Pancreas (tissue), 10 donors: ENCODE measurements at regions of chr6 and their contacts with region 1.

Region 1: DNA sequence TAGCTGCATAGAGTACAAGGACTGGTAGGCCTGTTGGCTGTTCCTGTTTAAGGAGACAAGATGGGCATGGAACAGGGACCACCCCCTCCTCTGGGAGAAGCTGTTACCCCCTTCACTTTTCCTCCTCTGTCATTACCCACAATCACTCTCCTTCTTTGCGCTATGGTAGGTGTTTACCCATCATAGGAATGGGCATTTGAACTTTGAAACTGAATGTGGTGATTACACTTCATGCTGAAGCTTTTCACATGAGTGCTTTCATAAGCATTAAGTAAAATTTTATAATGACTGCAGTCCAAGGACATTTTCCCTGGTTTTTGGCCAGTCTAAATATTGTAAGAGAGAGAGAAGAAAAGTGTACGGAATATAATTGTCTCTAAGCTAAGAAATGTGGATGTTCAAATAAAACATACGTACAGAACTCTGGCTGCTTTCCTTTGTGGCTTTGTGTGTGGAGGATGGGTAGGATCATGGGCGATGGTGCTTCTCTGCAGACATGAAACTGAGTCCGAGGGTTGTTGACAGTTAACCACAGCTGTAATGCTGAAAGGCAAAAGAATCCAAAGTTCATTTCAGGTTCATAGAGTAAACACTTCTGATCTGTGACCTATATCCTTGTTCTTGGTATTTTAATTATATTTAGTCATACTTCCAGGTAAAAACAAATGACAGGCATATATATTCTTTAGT is 56.3 kb downstream of the CCN2 start:
- DNase-seq: no peak
- ATAC-seq: peak; percentile 69 to 86 (median 80)
- H3K4me3 ChIP-seq: no peak overlapping the region
- H3K27ac ChIP-seq: peak overlapping the region; percentile 34 to 74 (median 58)
- H3K4me1 ChIP-seq: peaks cover 9 to 18% (median 15%) of the 10 kb centered on the region in 3 donors
- H3K27me3 ChIP-seq: no peaks in the 10 kb centered on the region
- CTCF ChIP-seq: no peak

Region 2: DNA sequence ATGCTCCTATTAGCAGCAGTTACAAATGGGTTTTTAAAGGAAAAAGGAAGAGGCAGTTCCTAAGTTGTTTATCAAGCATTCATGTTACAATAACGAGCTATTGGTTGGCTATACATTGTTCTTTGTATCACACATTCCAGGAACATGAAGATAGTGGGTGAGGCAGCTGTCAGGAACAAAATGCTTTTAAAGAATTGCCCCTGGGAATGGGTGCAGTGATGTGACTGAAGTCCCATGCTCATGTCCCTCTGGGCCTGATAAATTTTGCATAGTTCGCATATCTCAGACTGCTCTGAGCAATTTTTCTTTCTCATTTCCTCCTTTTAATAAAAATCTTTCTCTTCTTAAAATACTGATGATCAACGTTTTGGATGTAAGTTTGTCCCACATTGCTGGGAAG is 83.4 kb before region 1 on chr6:
- intact Hi-C with region 1: loop called in 1 of 3 experiments (anchors 5 kb)
- DNase-seq: no peak
- ATAC-seq: no peak
- H3K4me3 ChIP-seq: no peak overlapping the region
- H3K27ac ChIP-seq: no peak overlapping the region
- H3K4me1 ChIP-seq: peaks cover 0 to 20% (median 11%) of the 10 kb centered on the region in 3 donors
- H3K27me3 ChIP-seq: no peaks in the 10 kb centered on the region
- CTCF ChIP-seq: no peak

Region 3: GRCh38 chr6:131995917-131996316 is 101.0 kb after region 1 on chr6:
- intact Hi-C with region 1: no loop called
- DNase-seq: no peak
- ATAC-seq: no peak
- H3K4me3 ChIP-seq: no peak overlapping the region
- H3K27ac ChIP-seq: no peak overlapping the region
- H3K4me1 ChIP-seq: no peaks in the 10 kb centered on the region
- H3K27me3 ChIP-seq: no peaks in the 10 kb centered on the region
- CTCF ChIP-seq: no peak